Heart left ventricle (tissue), 16 donors: ENCODE measurements at regions of chr2 and their contacts with region 1.

Region 1: GRCh38 chr2:141498561-141498960 is 632.3 kb downstream of the LRP1B start:
- DNase-seq: no peak
- ATAC-seq: no peak
- H3K4me3 ChIP-seq: no peak overlapping the region
- H3K27ac ChIP-seq: no peak overlapping the region
- H3K4me1 ChIP-seq: peaks cover 0 to 6% (median 0%) of the 10 kb centered on the region in 12 donors
- H3K27me3 ChIP-seq: no peaks in the 10 kb centered on the region
- CTCF ChIP-seq: no peak
- POLR2A ChIP-seq: no peak

Region 2: GRCh38 chr2:141384676-141385075 is 113.9 kb before region 1 on chr2:
- intact Hi-C with region 1: no loop called
- DNase-seq: no peak
- ATAC-seq: no peak
- H3K4me3 ChIP-seq: no peak overlapping the region
- H3K27ac ChIP-seq: no peak overlapping the region
- H3K4me1 ChIP-seq: no peaks in the 10 kb centered on the region
- H3K27me3 ChIP-seq: no peaks in the 10 kb centered on the region
- CTCF ChIP-seq: no peak
- POLR2A ChIP-seq: no peak

Region 3: GRCh38 chr2:141440039-141440635 is 58.4 kb before region 1 on chr2:
- intact Hi-C with region 1: loop called in 1 of 10 experiments (anchors 5 kb)
- DNase-seq: peak in 1 of 5 donors; percentile 50
- ATAC-seq: no peak
- H3K4me3 ChIP-seq: no peak overlapping the region
- H3K27ac ChIP-seq: no peak overlapping the region
- H3K4me1 ChIP-seq: no peaks in the 10 kb centered on the region
- H3K27me3 ChIP-seq: no peaks in the 10 kb centered on the region
- CTCF ChIP-seq: no peak
- POLR2A ChIP-seq: no peak

Region 4: GRCh38 chr2:141707486-141707885 is 208.9 kb after region 1 on chr2:
- intact Hi-C with region 1: no loop called
- DNase-seq: no peak
- ATAC-seq: no peak
- H3K4me3 ChIP-seq: no peak overlapping the region
- H3K27ac ChIP-seq: no peak overlapping the region
- H3K4me1 ChIP-seq: no peaks in the 10 kb centered on the region
- H3K27me3 ChIP-seq: peaks cover 0 to 3% (median 0%) of the 10 kb centered on the region in 9 donors
- CTCF ChIP-seq: no peak
- POLR2A ChIP-seq: no peak